ENCODE measurements at regions of chr6 and their contacts with region 1.

Region 1: DNA sequence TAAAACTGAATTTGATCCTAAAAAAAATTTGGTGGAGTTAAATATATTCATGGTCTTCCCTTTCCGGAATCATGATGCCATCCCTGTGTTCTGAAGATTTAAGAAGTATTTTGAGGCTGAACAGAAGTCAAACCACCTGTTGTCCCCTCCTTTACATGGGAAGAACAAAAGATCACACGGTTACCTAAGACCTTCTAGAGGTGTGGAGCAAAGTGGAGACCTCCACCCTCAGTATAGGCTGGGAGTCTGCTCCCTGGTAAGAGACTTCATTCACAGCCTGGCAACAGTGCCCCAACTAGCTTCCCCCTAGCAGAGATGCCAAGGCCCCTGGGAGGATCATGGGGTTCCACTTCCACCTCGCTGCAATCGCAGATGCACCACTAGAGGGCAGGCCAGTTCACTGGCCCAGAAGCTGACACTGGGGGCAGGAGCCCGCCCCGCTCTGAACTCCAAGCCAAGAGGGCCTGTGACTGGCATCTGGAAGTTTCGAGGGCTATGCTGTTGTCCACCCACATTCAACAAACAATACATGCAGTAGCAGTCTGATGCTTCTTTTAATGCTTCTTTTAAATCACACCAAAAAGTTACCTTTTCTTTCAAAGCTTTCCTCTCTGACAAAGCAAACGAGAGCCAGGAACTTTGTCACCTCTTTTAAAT is 19.5 kb upstream of the UBE2J1 start:
- DNase-seq: peak; percentile 49 to 62
- ATAC-seq: peak; percentile 94 to 98
- H3K4me3 ChIP-seq: no peak overlapping the region
- H3K27ac ChIP-seq: no peak overlapping the region
- H3K4me1 ChIP-seq: no peaks in the 10 kb centered on the region
- CTCF ChIP-seq: peak; percentile 72
- EP300 ChIP-seq: no peak
- POLR2A ChIP-seq: no peak
- RAD21 ChIP-seq: peak; percentile 48 to 59; a peak in 4 of 5 replicates

Region 2: DNA sequence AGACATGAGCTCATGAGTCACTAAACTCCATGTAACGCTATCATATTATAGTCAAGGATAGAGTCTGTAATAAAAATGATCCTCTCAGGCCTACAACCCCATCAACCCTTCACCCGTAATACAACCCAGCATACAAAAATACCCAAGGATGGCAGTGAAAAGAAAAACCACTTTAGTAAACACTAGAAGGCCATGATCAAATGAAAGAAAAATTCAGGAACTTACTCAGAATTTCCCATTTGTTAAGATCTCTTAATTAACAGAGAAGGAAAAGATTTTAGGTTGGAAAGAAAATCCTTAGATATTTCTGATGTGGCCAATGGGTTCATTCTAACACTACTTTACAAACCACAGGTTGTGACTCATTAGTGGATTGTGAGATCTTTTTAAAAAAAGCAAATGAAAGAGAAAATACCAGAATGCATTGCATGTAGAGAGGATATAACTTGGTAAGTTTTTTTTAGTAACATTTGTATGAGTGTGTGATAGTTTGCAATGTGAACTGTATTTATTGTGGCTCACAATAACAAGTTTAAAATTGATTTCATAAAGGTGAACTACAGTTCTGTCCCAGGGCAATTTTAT is 11.5 kb before region 1 on chr6:
- CTCF ChIA-PET with region 1: interaction called, 25 read pairs
- POLR2A ChIA-PET with region 1: no interaction called
- DNase-seq: no peak
- ATAC-seq: no peak
- H3K4me3 ChIP-seq: no peak overlapping the region
- H3K27ac ChIP-seq: no peak overlapping the region
- H3K4me1 ChIP-seq: no peaks in the 10 kb centered on the region
- CTCF ChIP-seq: no peak
- EP300 ChIP-seq: no peak
- POLR2A ChIP-seq: no peak
- RAD21 ChIP-seq: no peak

Region 3: GRCh38 chr6:89385156-89385667 is 13.2 kb after region 1 on chr6:
- CTCF ChIA-PET with region 1: interaction called, 21 read pairs
- POLR2A ChIA-PET with region 1: no interaction called
- DNase-seq: peak in 1 of 2 experiments; percentile 7
- ATAC-seq: no peak
- H3K4me3 ChIP-seq: no peak overlapping the region
- H3K27ac ChIP-seq: no peak overlapping the region
- H3K4me1 ChIP-seq: no peaks in the 10 kb centered on the region
- CTCF ChIP-seq: no peak
- EP300 ChIP-seq: no peak
- POLR2A ChIP-seq: no peak
- RAD21 ChIP-seq: no peak

Region 4: DNA sequence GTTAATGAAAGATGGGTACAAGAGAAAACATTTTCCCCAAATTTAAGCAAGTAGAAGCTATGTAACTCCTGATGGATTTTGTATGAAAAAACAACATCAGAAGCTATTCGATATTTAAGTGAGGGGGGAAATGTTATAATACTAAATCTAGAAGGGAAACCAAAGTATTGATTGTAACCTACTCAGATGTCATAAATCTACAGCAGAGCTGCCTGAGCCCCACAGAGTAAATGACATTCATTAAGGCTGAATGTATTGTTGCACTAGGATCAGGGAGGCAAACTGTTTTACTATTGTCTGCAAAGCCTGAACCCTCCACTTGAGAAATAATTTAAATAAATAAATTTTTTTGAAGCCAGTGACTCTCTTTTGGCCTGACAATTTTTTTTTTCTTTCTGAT is 80.3 kb after region 1 on chr6:
- CTCF ChIA-PET with region 1: no interaction called
- POLR2A ChIA-PET with region 1: no interaction called
- DNase-seq: no peak
- ATAC-seq: no peak
- H3K4me3 ChIP-seq: no peak overlapping the region
- H3K27ac ChIP-seq: no peak overlapping the region
- H3K4me1 ChIP-seq: no peaks in the 10 kb centered on the region
- CTCF ChIP-seq: no peak
- EP300 ChIP-seq: no peak
- POLR2A ChIP-seq: no peak
- RAD21 ChIP-seq: no peak